Naive thymus-derived CD4-positive, alpha-beta T cell (primary cell): ENCODE measurements at regions of chr14 and their contacts with region 1.

Region 1: GRCh38 chr14:103847451-103848188 is at the start of gene PPP1R13B:
- DNase-seq: peak; percentile 85 to 97 (median 91)
- ATAC-seq: peak; percentile 99
- H3K4me3 ChIP-seq: peak within 1 kb of the TSS; percentile 51
- H3K4me3 Mint-ChIP-seq: peak within 1 kb of the TSS; percentile 78 to 94 (median 89)
- H3K27ac ChIP-seq: peak within 1 kb of the TSS; percentile 67
- H3K27ac Mint-ChIP-seq: peak within 1 kb of the TSS; percentile 60 to 92 (median 79)
- H3K4me1 ChIP-seq: no peaks in the 10 kb centered on the region
- H3K4me1 Mint-ChIP-seq: peaks cover 11 to 24% (median 17%) of the 10 kb centered on the region in 7 donors
- H3K27me3 ChIP-seq: no peaks in the 10 kb centered on the region
- H3K27me3 Mint-ChIP-seq: peaks cover 0 to 36% (median 0%) of the 10 kb centered on the region in 5 donors
- total RNA-seq, gene PPP1R13B: 10.8 to 26.8 (median 17.7) TPM

Region 2: GRCh38 chr14:103788086-103788485 is 59.5 kb before region 1 on chr14:
- CTCF ChIA-PET with region 1: no interaction called
- POLR2A ChIA-PET with region 1: no interaction called
- intact Hi-C with region 1: no loop called
- DNase-seq: no peak
- ATAC-seq: no peak
- H3K4me3 ChIP-seq: no peak overlapping the region
- H3K4me3 Mint-ChIP-seq: no peak overlapping the region
- H3K27ac ChIP-seq: no peak overlapping the region
- H3K27ac Mint-ChIP-seq: no peak overlapping the region
- H3K4me1 ChIP-seq: no peaks in the 10 kb centered on the region
- H3K4me1 Mint-ChIP-seq: no peaks in the 10 kb centered on the region
- H3K27me3 ChIP-seq: no peaks in the 10 kb centered on the region
- H3K27me3 Mint-ChIP-seq: no peaks in the 10 kb centered on the region

Region 3: DNA sequence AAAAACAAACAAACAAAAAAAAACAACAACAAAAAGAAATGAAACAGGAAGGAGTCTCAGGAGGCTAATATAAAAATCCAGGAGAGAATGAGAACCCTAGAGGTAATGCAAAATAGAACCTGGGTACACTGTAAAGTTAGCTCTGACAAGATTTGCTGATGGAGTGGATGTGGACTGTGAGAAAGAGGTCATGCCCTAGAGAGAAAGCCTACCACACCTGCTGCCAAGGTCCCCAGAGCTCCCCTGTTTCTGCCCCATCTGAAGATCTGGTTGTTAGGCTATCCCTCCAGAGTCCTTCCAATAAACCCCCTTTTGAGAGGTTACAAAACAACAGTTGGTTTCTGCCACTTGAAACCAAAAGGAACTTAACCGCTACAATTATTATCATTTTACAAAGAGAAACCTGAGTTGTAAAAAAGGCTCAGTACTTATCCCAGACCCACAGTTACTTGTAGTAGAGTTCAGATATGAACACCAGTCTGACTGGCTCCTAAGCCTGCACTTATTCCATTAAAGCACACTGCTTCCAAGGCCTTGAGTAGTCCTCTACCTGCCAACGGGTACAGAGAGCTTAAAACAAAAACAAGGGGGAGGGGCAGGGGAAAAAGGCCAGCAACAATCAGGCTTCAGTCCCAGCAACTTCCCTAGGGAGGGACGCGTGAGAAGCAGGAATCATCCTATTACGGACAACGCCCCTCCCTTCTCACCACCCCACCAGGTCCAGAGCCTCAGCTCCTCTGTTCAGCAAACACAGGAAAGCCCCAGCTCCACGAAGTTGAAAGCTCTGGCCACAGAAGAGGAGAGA is 27.9 kb before region 1 on chr14:
- CTCF ChIA-PET with region 1: no interaction called
- POLR2A ChIA-PET with region 1: no interaction called
- intact Hi-C with region 1: loop called in 1 of 2 experiments (anchors 2 kb)
- DNase-seq: no peak
- ATAC-seq: no peak
- H3K4me3 ChIP-seq: no peak overlapping the region
- H3K4me3 Mint-ChIP-seq: peak overlapping the region in 6 of 10 donors; percentile 9 to 74 (median 46)
- H3K27ac ChIP-seq: no peak overlapping the region
- H3K27ac Mint-ChIP-seq: peak overlapping the region in 8 of 9 donors; percentile 24 to 76 (median 57)
- H3K4me1 ChIP-seq: peaks cover 0 to 18% of the 10 kb centered on the region in 2 donors
- H3K4me1 Mint-ChIP-seq: peaks cover 0 to 52% (median 48%) of the 10 kb centered on the region in 7 donors
- H3K27me3 ChIP-seq: no peaks in the 10 kb centered on the region
- H3K27me3 Mint-ChIP-seq: peaks cover 0 to 7% (median 0%) of the 10 kb centered on the region in 5 donors

Region 4: DNA sequence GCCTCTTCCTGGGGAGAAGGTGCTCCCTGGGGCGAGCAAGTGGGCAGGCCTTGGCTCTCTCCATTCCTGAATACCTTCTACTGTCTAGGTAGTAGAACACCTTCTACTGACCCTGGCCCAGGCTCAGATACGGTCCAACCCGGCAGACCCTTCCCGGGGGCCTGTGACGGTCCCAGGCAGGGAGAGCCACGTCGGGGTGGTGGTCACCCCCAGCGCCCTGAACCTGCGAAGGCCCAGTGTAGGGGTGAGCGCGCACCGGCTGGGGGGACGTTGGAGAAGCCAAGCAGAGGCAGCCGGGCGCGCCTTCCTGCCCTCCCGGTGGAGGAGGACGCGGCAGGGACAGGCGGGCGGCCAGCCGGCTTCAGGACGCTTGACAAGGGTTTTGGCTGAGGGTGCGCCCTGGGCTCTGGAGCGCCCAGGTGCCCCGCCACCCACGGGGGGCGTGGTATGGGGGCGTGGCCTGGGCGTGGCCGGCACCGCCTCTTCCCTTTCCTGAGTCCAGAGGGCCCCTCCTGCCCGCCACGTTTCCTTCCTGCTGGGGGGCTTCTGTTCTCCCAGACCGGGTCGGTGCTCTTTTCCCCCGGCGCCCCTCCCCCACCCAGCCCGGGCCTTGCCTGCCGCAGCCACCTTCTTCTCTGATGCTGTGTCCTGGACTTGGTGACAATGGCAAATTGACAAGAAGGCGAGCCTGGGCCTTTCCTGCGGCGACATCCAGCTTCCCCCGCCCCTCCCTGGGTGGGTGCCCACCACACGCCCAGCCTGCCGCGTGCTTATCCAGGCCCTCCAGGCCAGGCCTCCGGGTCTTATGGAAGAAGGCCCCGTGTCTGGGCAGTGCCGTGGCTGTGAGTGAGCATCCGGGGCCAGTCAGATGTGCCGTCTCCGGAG is 24.2 kb after region 1 on chr14:
- CTCF ChIA-PET with region 1: no interaction called
- POLR2A ChIA-PET with region 1: interaction called, 3 read pairs
- intact Hi-C with region 1: loop called (anchors 1 kb)
- DNase-seq: peak; percentile 51 to 87 (median 67)
- ATAC-seq: peak; percentile 90
- H3K4me3 ChIP-seq: peak overlapping the region; percentile 70
- H3K4me3 Mint-ChIP-seq: peak overlapping the region; percentile 77 to 90 (median 83)
- H3K27ac ChIP-seq: peak overlapping the region; percentile 70
- H3K27ac Mint-ChIP-seq: peak overlapping the region; percentile 66 to 93 (median 78)
- H3K4me1 ChIP-seq: peaks cover 5 to 9% of the 10 kb centered on the region in 2 donors
- H3K4me1 Mint-ChIP-seq: peaks cover 10 to 15% (median 12%) of the 10 kb centered on the region in 7 donors
- H3K27me3 ChIP-seq: no peaks in the 10 kb centered on the region
- H3K27me3 Mint-ChIP-seq: no peaks in the 10 kb centered on the region

Region 5: GRCh38 chr14:104318558-104319421 is 471.2 kb after region 1 on chr14:
- CTCF ChIA-PET with region 1: no interaction called
- POLR2A ChIA-PET with region 1: no interaction called
- intact Hi-C with region 1: no loop called
- DNase-seq: no peak
- ATAC-seq: no peak
- H3K4me3 ChIP-seq: no peak overlapping the region
- H3K4me3 Mint-ChIP-seq: no peak overlapping the region
- H3K27ac ChIP-seq: no peak overlapping the region
- H3K27ac Mint-ChIP-seq: peak overlapping the region in 1 of 9 donors; percentile 41
- H3K4me1 ChIP-seq: no peaks in the 10 kb centered on the region
- H3K4me1 Mint-ChIP-seq: peaks cover 0 to 5% (median 0%) of the 10 kb centered on the region in 7 donors
- H3K27me3 ChIP-seq: peaks cover 0 to 3% of the 10 kb centered on the region in 2 donors
- H3K27me3 Mint-ChIP-seq: peaks cover 0 to 14% (median 5%) of the 10 kb centered on the region in 5 donors

Region 6: DNA sequence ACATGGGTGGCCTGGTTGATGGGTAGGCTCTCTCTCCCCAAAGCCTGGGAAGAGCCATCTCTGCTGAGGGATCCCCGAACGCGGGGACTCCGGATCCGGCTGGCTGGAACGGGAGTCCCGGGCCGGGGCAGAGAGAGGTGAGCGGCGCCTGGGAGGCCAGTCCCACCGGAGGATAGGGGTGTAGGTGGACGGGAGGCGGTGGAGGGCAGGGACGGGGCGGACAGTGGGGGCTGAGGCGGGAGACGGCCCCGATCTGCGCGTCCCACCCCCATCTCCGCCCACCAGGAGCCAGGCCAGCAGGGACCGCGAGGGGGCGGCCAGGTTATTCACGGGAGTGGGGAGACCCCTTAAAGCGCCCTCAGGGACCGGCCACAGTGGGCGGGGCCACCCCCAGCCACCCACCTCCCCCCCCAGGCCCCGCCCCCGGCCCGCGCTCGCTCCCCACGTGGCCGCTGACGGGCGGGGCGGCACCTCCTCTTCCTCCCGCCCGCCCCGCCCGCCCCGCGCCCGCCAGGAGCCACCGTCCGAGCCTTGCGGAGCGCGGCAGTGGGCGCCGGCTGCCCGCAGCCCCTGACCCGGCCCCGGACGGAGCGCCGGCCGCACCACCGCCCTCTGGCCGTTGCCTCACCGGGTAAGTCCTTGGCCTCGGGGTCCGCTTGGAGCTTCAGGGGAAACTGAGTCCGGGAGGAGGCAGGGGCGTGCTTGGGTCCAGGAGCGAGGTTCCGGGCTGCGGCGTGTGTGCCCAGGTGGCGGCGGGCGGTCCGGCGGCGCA is 841.7 kb after region 1 on chr14 and contains the start of gene INF2:
- CTCF ChIA-PET with region 1: no interaction called
- POLR2A ChIA-PET with region 1: no interaction called
- intact Hi-C with region 1: loop called in 1 of 2 experiments (anchors 5 kb)
- DNase-seq: peak in 6 of 9 donors; percentile 36 to 64 (median 40)
- ATAC-seq: peak; percentile 79
- H3K4me3 ChIP-seq: peak within 1 kb of the TSS; percentile 70
- H3K4me3 Mint-ChIP-seq: peak within 1 kb of the TSS; percentile 58 to 91 (median 79)
- H3K27ac ChIP-seq: peak within 1 kb of the TSS; percentile 77
- H3K27ac Mint-ChIP-seq: peak within 1 kb of the TSS in 5 of 9 donors; percentile 8 to 90 (median 65)
- H3K4me1 ChIP-seq: peaks cover 10 to 62% of the 10 kb centered on the region in 2 donors
- H3K4me1 Mint-ChIP-seq: peaks cover 14 to 64% (median 48%) of the 10 kb centered on the region in 7 donors
- H3K27me3 ChIP-seq: no peaks in the 10 kb centered on the region
- H3K27me3 Mint-ChIP-seq: no peaks in the 10 kb centered on the region
- total RNA-seq, gene INF2: 65.0 to 140 (median 95.5) TPM